ENCODE measurements at regions of chr5 and their contacts with region 1.

Region 1: GRCh38 chr5:141223112-141223783 is at the start of gene PCDHB14:
- DNase-seq: no peak
- H3K4me3 ChIP-seq: peak within 1 kb of the TSS; percentile 8 to 50 (median 29); a peak in 5 of 8 replicates
- H3K27ac ChIP-seq: no peak within 1 kb of the TSS
- H3K4me1 ChIP-seq: peaks cover 2 to 3% (median 3%) of the 10 kb centered on the region in 4 experiments; a peak in 2 of 7 replicates
- H3K27me3 ChIP-seq: no peaks in the 10 kb centered on the region
- CTCF ChIP-seq: peak in 2 of 3 experiments; percentile 50 to 64; a peak in 3 of 4 replicates
- EP300 ChIP-seq: no peak
- POLR2A ChIP-seq: no peak
- RAD21 ChIP-seq: peak; percentile 81 to 85
- total RNA-seq, gene PCDHB14: 2.7 and 2.9 TPM in 2 replicates

Region 2: DNA sequence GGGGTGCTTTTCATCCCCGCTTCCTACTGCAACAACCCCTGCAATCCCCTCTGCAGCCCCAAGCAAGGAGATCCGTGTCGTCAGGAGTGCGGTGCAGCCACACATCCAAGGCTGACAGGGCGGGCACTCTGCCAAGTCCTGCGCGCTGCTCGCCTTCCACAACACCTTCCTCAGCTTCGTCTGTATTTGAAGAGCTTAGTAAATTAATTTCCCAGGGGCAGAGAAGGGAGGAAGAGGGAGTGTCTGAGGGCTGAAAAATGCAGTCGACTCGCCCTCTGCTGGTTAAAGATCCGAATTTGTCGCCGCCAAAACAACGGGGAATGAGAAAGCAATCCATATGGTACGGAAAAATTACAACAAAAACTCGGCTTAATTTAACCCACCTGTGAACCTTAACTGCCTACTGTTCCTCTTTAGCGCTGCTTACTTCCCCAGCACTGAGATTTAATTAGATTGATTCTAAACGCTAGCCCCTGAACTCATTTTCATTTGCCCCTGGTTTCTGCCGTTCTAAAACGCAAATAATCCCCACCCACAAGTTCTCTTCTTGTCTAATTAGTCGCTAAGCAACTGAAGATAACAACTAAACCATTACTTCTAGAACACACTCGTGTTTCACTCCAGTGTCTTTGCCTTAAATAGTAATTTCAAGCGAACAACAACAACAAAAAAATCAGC is 183.0 kb before region 1 on chr5:
- CTCF ChIA-PET with region 1: no interaction called
- POLR2A ChIA-PET with region 1: no interaction called
- DNase-seq: peak; percentile 63 to 81
- H3K4me3 ChIP-seq: peak overlapping the region; percentile 71 to 86 (median 74)
- H3K27ac ChIP-seq: peak overlapping the region; percentile 97
- H3K4me1 ChIP-seq: peaks cover 0 to 8% (median 6%) of the 10 kb centered on the region in 4 experiments; a peak in 3 of 7 replicates
- H3K27me3 ChIP-seq: no peaks in the 10 kb centered on the region
- CTCF ChIP-seq: peak; percentile 58 to 83 (median 73)
- EP300 ChIP-seq: no peak
- POLR2A ChIP-seq: no peak
- RAD21 ChIP-seq: peak; percentile 91

Region 3: DNA sequence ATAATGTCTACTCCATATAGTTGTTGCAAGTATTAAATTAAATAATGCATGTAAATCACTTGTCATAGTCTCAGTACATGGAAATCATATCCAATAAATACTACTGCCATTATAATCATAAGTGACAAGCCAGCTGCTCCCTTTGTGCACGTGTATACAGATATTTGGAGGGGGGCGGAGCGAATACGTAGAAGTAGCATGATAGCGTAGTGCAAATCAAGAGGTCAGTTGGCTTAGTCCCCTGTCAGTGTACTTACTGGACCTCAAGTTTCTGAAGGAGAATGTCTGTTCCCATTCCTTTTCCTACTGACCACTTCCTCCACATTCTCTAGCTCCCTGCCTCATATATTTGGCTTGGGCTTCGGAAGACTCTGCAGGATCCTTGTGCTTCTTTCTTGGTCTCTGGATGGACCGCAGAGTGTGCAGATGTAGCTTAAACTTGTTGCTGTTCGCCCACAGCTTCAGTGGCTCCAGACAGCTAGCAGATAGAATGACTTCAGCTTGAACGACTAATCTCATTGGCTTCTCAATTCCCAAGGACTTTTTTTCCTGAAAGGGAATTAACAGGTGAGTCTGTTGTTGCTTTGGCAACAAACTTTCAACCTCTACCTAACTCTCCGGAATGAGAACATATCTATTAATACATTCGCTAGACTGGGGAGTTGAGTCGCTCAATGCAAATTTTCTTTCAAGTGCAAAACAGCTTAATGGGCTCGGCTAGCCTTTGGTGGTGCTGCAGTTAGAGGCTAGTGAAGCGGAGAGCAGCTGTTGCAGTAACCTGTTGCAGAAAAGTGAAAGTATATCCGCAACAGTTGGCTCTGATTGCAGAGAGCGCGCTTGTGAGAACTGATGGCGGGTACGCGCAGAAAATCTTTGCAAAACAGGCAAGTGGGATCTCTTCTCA is 172.4 kb before region 1 on chr5 and contains the start of gene PCDHB1:
- CTCF ChIA-PET with region 1: no interaction called
- POLR2A ChIA-PET with region 1: no interaction called
- DNase-seq: no peak
- H3K4me3 ChIP-seq: peak within 1 kb of the TSS; percentile 42 to 65 (median 60)
- H3K27ac ChIP-seq: no peak within 1 kb of the TSS
- H3K4me1 ChIP-seq: peaks cover 0 to 9% (median 3%) of the 10 kb centered on the region in 4 experiments; a peak in 5 of 7 replicates
- H3K27me3 ChIP-seq: peaks cover 0 to 14% (median 11%) of the 10 kb centered on the region in 4 experiments; a peak in 6 of 7 replicates
- CTCF ChIP-seq: no peak
- EP300 ChIP-seq: no peak
- POLR2A ChIP-seq: no peak
- RAD21 ChIP-seq: no peak
- total RNA-seq, gene PCDHB1: 0.04 and 0.08 TPM in 2 replicates

Region 4: GRCh38 chr5:141199359-141200235 is 23.7 kb before region 1 on chr5 and contains the start of gene PCDHB11:
- CTCF ChIA-PET with region 1: interaction called, 27 read pairs
- POLR2A ChIA-PET with region 1: no interaction called
- DNase-seq: no peak
- H3K4me3 ChIP-seq: peak within 1 kb of the TSS in 1 of 4 experiments; percentile 25; a peak in 2 of 8 replicates
- H3K27ac ChIP-seq: no peak within 1 kb of the TSS
- H3K4me1 ChIP-seq: no peaks in the 10 kb centered on the region
- H3K27me3 ChIP-seq: no peaks in the 10 kb centered on the region
- CTCF ChIP-seq: peak in 2 of 3 experiments; percentile 55 to 66; a peak in 3 of 4 replicates
- EP300 ChIP-seq: no peak
- POLR2A ChIP-seq: no peak
- RAD21 ChIP-seq: peak; percentile 68 to 73
- total RNA-seq, gene PCDHB11: 0.86 and 1.4 TPM in 2 replicates

Region 5: GRCh38 chr5:141260458-141261237 is 37.4 kb after region 1 on chr5:
- CTCF ChIA-PET with region 1: interaction called, 10 read pairs
- POLR2A ChIA-PET with region 1: no interaction called
- DNase-seq: no peak
- H3K4me3 ChIP-seq: no peak overlapping the region
- H3K27ac ChIP-seq: no peak overlapping the region
- H3K4me1 ChIP-seq: no peaks in the 10 kb centered on the region
- H3K27me3 ChIP-seq: no peaks in the 10 kb centered on the region
- CTCF ChIP-seq: no peak
- EP300 ChIP-seq: no peak
- POLR2A ChIP-seq: no peak
- RAD21 ChIP-seq: no peak

Region 6: DNA sequence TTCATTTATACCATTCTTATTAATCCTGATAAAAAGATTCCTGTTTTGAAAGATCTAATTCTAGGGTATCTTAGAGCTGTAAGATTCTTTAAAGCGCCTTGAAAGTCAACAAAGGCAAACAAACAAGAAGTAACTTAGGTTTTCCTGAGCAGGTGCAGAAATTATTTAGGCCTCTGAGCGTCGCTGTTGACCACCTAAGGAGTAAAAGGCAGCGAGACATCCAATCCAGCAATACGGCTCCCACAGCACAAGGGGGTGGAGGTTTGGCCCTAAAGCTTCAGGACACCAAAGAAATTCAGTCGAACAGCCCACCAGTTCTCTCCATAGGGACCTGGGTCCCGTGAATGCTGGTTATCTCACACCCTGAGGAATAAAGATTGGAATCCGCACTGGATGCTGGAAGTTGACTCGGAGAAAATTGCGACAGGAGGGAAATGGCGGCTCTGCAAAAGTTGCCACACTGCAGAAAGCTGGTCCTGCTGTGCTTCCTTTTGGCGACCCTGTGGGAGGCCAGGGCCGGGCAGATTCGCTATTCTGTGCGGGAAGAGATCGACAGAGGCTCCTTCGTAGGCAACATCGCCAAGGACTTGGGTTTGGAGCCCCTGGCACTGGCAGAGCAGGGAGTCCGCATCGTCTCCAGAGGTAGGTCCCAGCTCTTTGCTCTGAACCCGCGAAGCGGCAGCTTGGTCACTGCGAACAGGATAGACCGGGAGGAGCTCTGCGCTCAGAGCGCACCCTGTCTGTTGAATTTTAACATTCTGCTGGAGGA is 115.5 kb after region 1 on chr5 and contains the start of gene PCDHGA2:
- CTCF ChIA-PET with region 1: interaction called, 13 read pairs
- POLR2A ChIA-PET with region 1: no interaction called
- DNase-seq: no peak
- H3K4me3 ChIP-seq: no peak within 1 kb of the TSS
- H3K27ac ChIP-seq: no peak within 1 kb of the TSS
- H3K4me1 ChIP-seq: no peaks in the 10 kb centered on the region
- H3K27me3 ChIP-seq: no peaks in the 10 kb centered on the region
- CTCF ChIP-seq: peak; percentile 10 to 77 (median 60)
- EP300 ChIP-seq: no peak
- POLR2A ChIP-seq: no peak
- RAD21 ChIP-seq: peak; percentile 58 to 65
- total RNA-seq, gene PCDHGA2: 0.31 and 0.32 TPM in 2 replicates

Region 7: GRCh38 chr5:141430332-141431113 is 207.3 kb after region 1 on chr5 and contains the start of gene PCDHGA12:
- CTCF ChIA-PET with region 1: interaction called, 11 read pairs
- POLR2A ChIA-PET with region 1: no interaction called
- DNase-seq: no peak
- H3K4me3 ChIP-seq: no peak within 1 kb of the TSS
- H3K27ac ChIP-seq: no peak within 1 kb of the TSS
- H3K4me1 ChIP-seq: no peaks in the 10 kb centered on the region
- H3K27me3 ChIP-seq: no peaks in the 10 kb centered on the region
- CTCF ChIP-seq: no peak; a peak in 1 of 4 replicates
- EP300 ChIP-seq: no peak
- POLR2A ChIP-seq: no peak
- RAD21 ChIP-seq: peak; percentile 18 to 36; a peak in 3 of 4 replicates
- total RNA-seq, gene PCDHGA12: 1.0 and 1.3 TPM in 2 replicates

Region 8: GRCh38 chr5:141557681-141558136 is 334.5 kb after region 1 on chr5:
- CTCF ChIA-PET with region 1: interaction called, 26 read pairs
- POLR2A ChIA-PET with region 1: interaction called, 5 read pairs
- DNase-seq: peak; percentile 82 to 89
- H3K4me3 ChIP-seq: peak overlapping the region in 1 of 4 experiments; percentile 25; a peak in 2 of 8 replicates
- H3K27ac ChIP-seq: peak overlapping the region; percentile 90
- H3K4me1 ChIP-seq: peaks cover 3 to 18% (median 6%) of the 10 kb centered on the region in 4 experiments; a peak in 6 of 7 replicates
- H3K27me3 ChIP-seq: no peaks in the 10 kb centered on the region
- CTCF ChIP-seq: peak; percentile 65 to 85 (median 81)
- EP300 ChIP-seq: peak in 1 of 2 experiments; percentile 54; a peak in 1 of 3 replicates
- POLR2A ChIP-seq: peak; percentile 44 to 60
- RAD21 ChIP-seq: peak; percentile 84 to 87

Measured in H1 (cell line).